ENCODE measurements at regions of chr5 and their contacts with region 1.

Region 1: DNA sequence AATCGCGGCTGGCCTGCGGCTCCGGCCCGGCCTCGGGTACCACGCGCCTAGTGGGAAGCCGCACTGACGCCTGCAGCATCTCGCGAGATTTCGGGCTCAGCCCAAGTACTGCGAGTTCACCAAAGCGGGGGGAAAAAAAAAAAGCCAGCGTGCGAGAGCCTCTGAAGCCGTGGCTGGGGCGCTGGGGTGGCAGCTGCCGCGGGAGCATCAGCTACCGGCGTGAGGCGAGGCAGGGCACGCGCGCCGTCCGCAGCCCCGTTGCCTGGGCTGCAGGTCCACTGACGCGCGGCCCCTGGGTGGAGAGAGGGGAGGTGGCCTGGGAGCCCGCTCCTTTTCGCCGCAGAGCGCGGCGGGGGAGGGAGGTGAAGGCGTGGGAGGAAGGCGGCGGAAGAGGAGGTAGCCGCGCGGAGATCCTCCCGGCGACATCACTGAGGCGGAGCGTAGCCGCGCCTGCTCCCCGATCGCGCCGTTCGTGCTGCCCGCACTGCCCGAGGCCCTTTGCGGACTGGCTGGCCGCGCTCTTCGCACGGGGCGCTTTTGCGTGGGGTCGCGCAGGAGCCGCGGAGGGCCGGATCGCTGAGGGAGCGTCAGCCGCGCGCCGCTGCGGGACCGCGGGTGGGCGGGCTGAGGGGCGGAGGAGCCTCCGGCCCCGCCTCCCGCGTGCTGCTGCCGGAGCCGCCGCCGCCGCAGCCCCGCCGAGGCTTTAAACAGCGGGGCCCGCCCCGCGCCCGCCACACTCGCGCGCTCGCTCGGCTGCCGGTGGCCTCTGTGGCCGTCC is at the start of gene SLC12A2:
- DNase-seq: peak; percentile 96
- H3K4me3 ChIP-seq: peak within 1 kb of the TSS; percentile 92 to 95 (median 94)
- H3K27ac ChIP-seq: peak within 1 kb of the TSS; percentile 95 to 99 (median 97)
- H3K4me1 ChIP-seq: peaks cover 28 to 61% (median 59%) of the 10 kb centered on the region in 4 donors
- H3K27me3 ChIP-seq: no peaks in the 10 kb centered on the region
- CTCF ChIP-seq: no peak
- EP300 ChIP-seq: no peak
- POLR2A ChIP-seq: peak; percentile 11
- total RNA-seq, gene SLC12A2: 93.4 to 132 (median 113) TPM

Region 2: GRCh38 chr5:127564002-127564769 is 519.0 kb before region 1 on chr5:
- intact Hi-C with region 1: loop called (anchors 5 kb)
- DNase-seq: no peak
- H3K4me3 ChIP-seq: no peak overlapping the region
- H3K27ac ChIP-seq: peak overlapping the region; percentile 55 to 61 (median 57)
- H3K4me1 ChIP-seq: peaks cover 8 to 52% (median 41%) of the 10 kb centered on the region in 4 donors
- H3K27me3 ChIP-seq: no peaks in the 10 kb centered on the region
- CTCF ChIP-seq: peak; percentile 72 to 78 (median 73)
- EP300 ChIP-seq: no peak
- POLR2A ChIP-seq: no peak

Region 3: GRCh38 chr5:127757576-127757975 is 325.6 kb before region 1 on chr5:
- intact Hi-C with region 1: loop called (anchors 10 kb)
- DNase-seq: no peak
- H3K4me3 ChIP-seq: no peak overlapping the region
- H3K27ac ChIP-seq: peak overlapping the region; percentile 5 to 52 (median 26)
- H3K4me1 ChIP-seq: peaks cover 4 to 53% (median 49%) of the 10 kb centered on the region in 4 donors
- H3K27me3 ChIP-seq: no peaks in the 10 kb centered on the region
- CTCF ChIP-seq: peak; percentile 43 to 55 (median 46)
- EP300 ChIP-seq: no peak
- POLR2A ChIP-seq: no peak

Region 4: GRCh38 chr5:127875235-127876021 is 207.8 kb before region 1 on chr5:
- intact Hi-C with region 1: loop called (anchors 10 kb)
- DNase-seq: no peak
- H3K4me3 ChIP-seq: peak overlapping the region in 1 of 4 donors; percentile 4
- H3K27ac ChIP-seq: peak overlapping the region; percentile 52 to 66 (median 58)
- H3K4me1 ChIP-seq: peaks cover 19 to 44% (median 41%) of the 10 kb centered on the region in 4 donors
- H3K27me3 ChIP-seq: no peaks in the 10 kb centered on the region
- CTCF ChIP-seq: peak in 2 of 3 experiments; percentile 16 to 23
- EP300 ChIP-seq: no peak
- POLR2A ChIP-seq: no peak

Region 5: DNA sequence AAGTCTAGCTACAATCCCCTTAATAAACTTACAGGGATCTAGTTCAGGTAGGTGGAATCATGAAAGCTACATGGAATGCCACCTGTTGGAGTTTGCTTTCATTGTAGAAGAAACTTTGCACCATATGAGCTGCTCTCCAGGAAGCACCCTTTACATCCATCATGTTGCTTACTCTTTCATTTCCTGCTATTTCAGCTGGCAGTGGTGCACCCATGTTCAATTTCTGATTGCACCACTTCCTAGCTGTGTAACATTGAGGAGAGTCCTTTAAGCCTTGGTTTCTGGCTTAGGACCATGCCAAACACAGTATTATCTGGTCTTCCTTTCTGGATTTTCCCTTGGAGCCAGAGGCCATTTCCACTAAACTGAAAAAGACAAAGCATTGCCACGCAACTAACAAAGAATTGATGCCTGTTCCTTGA is 122.9 kb before region 1 on chr5:
- intact Hi-C with region 1: loop called (anchors 2 kb)
- DNase-seq: no peak
- H3K4me3 ChIP-seq: no peak overlapping the region
- H3K27ac ChIP-seq: peak overlapping the region in 3 of 4 donors; percentile 25 to 40 (median 35)
- H3K4me1 ChIP-seq: peaks cover 41 to 52% (median 51%) of the 10 kb centered on the region in 4 donors
- H3K27me3 ChIP-seq: no peaks in the 10 kb centered on the region
- CTCF ChIP-seq: no peak
- EP300 ChIP-seq: no peak
- POLR2A ChIP-seq: no peak